Heart right ventricle (tissue), 16 donors: ENCODE measurements at regions of chr15 and their contacts with region 1.

Region 1: GRCh38 chr15:20356444-20356910 is 185.1 kb downstream of the GOLGA6L6 start:
- DNase-seq: peak; percentile 64 to 71
- ATAC-seq: peak in 7 of 8 donors; percentile 18 to 68 (median 41)
- H3K4me3 ChIP-seq: no peak overlapping the region
- H3K27ac ChIP-seq: no peak overlapping the region
- H3K4me1 ChIP-seq: peaks cover 0 to 3% (median 0%) of the 10 kb centered on the region in 9 donors
- H3K27me3 ChIP-seq: peaks cover 0 to 74% (median 19%) of the 10 kb centered on the region in 7 donors
- CTCF ChIP-seq: peak; percentile 71 to 98 (median 92)

Region 2: GRCh38 chr15:20409247-20409646 is 52.8 kb after region 1 on chr15:
- intact Hi-C with region 1: loop called in 2 of 10 experiments (anchors 10 kb)
- DNase-seq: no peak
- ATAC-seq: peak in 1 of 8 donors; percentile 27
- H3K4me3 ChIP-seq: no peak overlapping the region
- H3K27ac ChIP-seq: no peak overlapping the region
- H3K4me1 ChIP-seq: no peaks in the 10 kb centered on the region
- H3K27me3 ChIP-seq: no peaks in the 10 kb centered on the region
- CTCF ChIP-seq: no peak

Region 3: DNA sequence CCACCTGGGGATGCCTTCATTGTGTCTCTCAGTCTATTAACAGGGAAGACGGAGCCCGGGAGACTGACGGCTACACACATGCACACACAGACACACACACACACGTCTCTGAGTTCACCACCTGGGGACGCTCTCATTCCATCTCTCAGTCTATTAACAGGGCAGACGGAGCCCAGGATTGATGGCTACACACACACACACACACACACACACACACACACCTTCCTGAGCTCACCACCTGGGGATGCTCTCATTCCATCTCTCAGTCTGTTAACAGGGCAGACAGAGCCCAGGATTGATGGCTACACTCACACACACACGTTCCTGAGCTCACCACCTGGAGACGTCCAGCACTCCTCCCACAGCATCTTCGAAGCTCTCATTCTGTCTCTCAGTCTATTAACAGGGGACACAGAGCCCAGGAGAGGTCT is 1867.8 kb after region 1 on chr15:
- intact Hi-C with region 1: loop called in 1 of 10 experiments (anchors 5 kb)
- DNase-seq: no peak
- ATAC-seq: no peak
- H3K4me3 ChIP-seq: no peak overlapping the region
- H3K27ac ChIP-seq: no peak overlapping the region
- H3K4me1 ChIP-seq: peaks cover 0 to 9% (median 0%) of the 10 kb centered on the region in 9 donors
- H3K27me3 ChIP-seq: peaks cover 0 to 30% (median 0%) of the 10 kb centered on the region in 7 donors
- CTCF ChIP-seq: no peak